SK-N-SH (cell line): ENCODE measurements at regions of chr16 and their contacts with region 1.

Region 1: DNA sequence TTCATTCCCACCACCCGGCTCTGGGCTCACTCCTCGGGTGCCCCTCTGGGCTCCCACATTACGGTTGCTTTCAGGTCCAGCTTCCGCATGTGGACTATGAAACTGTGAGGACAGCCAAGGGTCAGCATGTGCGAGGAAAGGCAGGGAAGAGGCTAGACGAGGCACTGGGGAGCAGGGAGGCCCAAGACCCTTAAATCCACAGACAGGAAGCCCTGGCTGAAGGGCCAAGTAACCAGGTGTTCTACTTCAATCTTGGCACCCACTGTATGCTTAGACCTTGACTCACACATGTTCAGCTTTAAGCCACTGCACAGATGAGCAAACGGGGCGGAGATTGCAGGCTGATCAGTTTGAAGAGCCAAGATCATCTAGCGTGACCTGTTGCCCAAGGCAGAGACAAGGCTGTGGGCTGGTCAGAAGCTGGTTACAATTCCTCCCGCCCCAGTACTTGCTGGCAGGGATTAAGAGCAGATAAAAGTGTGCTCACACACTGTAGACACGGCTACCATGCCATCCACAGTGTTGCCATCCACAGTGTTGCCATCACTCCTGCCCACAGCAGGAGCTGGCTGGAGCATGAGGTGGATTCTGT is at the start of gene CES4A:
- DNase-seq: no peak
- H3K4me3 ChIP-seq: no peak within 1 kb of the TSS
- H3K27ac ChIP-seq: no peak within 1 kb of the TSS
- H3K4me1 ChIP-seq: no peaks in the 10 kb centered on the region
- H3K27me3 ChIP-seq: no peaks in the 10 kb centered on the region
- CTCF ChIP-seq: no peak
- EP300 ChIP-seq: no peak
- RAD21 ChIP-seq: no peak
- polyA plus RNA-seq, gene CES4A: 7.3 and 13.2 TPM in 2 replicates

Region 2: GRCh38 chr16:66977341-66978113 is 10.8 kb before region 1 on chr16:
- CTCF ChIA-PET with region 1: interaction called, 12 read pairs
- POLR2A ChIA-PET with region 1: no interaction called
- DNase-seq: peak; percentile 94
- H3K4me3 ChIP-seq: peak overlapping the region in 1 of 2 experiments; percentile 46; a peak in 1 of 4 replicates
- H3K27ac ChIP-seq: no peak overlapping the region
- H3K4me1 ChIP-seq: no peaks in the 10 kb centered on the region; a peak in 1 of 4 replicates
- H3K27me3 ChIP-seq: no peaks in the 10 kb centered on the region
- CTCF ChIP-seq: peak; percentile 93
- EP300 ChIP-seq: no peak
- RAD21 ChIP-seq: peak; percentile 99